ENCODE measurements at regions of chr1 and their contacts with region 1.

Region 1: DNA sequence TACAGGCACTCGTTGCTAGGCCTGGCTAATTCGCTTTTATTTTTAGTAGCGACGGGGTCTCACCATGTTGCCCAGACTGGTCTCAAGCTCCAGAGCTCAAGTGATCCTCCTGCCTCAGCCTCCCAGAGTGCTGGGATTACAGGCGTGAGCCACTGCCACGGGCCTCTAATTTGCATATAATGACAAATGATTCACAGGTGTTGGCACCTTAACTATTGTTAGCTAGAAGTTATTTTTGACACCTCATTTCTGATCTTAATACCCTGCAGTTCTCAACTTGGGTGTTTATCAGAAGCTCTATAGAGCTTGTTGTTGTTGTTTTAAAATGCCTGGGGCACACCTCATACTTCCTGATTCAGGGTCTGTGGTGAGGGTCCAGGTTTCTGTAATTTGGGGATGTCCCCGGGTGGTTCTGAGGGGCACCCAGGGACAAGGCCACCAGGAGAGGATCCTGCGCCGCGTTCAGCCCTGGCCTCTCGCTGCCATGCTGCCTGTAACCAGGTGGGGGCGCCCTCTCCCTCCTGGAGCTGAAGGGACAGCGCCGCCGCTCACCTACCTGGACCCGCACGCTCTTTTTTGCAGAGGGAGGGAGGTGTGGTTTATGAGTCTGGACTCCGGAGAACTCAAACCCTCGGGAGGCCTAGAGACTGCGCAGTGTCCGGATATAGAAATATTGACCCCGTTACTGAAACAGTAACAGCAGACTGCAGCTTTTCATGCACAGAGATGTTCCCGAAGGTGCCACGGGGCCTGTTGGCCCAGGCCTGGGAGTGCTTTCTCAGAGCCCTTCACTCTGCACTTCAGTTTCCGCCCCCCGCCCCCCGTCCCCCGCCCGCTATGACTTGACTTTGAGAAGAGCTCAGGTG is 23.0 kb upstream of the NEK2 start:
- DNase-seq: peak; percentile 93
- H3K4me3 Mint-ChIP-seq: no peak overlapping the region
- H3K27ac Mint-ChIP-seq: no peak overlapping the region
- H3K4me1 Mint-ChIP-seq: no peaks in the 10 kb centered on the region
- H3K27me3 Mint-ChIP-seq: no peaks in the 10 kb centered on the region
- CTCF ChIP-seq: peak; percentile 100

Region 2: DNA sequence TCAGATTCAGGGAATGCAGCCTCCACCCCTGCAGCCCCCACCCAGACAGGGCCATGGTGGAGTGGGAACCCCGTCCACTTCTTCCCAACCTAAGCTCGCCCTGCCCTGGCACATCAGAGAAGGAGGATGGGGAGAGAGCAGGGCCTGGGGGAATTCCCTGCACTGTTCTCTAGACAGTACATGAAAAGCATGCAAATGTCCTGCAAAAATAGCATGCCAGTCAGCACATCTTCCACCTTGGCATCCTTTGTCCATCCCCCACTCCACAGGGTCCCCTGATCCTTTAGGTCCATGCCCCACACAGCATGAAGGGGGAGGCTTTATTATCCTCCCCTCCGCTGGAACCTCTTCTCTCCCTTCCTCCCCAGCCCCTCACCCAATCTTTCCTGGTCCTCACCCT is 171.4 kb before region 1 on chr1:
- CTCF ChIA-PET with region 1: no interaction called
- POLR2A ChIA-PET with region 1: no interaction called
- intact Hi-C with region 1: no loop called
- DNase-seq: no peak
- H3K4me3 Mint-ChIP-seq: no peak overlapping the region
- H3K27ac Mint-ChIP-seq: peak overlapping the region; percentile 4
- H3K4me1 Mint-ChIP-seq: peaks cover 39% of the 10 kb centered on the region
- H3K27me3 Mint-ChIP-seq: no peaks in the 10 kb centered on the region
- CTCF ChIP-seq: no peak

Region 3: DNA sequence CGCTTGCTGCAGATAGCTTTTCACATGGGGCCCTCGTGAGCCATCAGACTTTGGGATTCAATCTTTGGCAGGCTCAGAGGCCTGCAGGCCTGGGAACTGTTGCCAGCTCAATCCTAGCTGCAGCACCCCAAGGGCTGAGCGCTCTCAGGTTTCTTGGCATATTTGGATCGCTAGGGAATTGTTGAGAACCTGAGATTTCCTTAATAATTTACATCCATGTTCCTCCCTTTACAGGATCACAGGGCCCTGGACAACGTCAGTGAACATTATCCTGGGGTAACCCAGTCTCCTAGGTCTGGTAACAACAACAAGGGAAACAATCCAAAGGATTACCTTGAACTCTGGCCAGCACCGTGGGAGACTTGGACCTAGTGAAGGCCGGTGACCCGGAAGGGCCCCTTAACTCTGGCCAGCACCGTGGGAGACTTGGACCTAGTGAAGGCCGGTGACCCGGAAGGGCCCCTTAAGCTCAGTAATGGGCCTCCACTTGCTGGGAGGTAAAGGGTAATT is 26.3 kb after region 1 on chr1:
- CTCF ChIA-PET with region 1: interaction called, 25 read pairs
- POLR2A ChIA-PET with region 1: interaction called, 3 read pairs
- intact Hi-C with region 1: no loop called
- DNase-seq: no peak
- H3K4me3 Mint-ChIP-seq: no peak overlapping the region
- H3K27ac Mint-ChIP-seq: no peak overlapping the region
- H3K4me1 Mint-ChIP-seq: no peaks in the 10 kb centered on the region
- H3K27me3 Mint-ChIP-seq: no peaks in the 10 kb centered on the region
- CTCF ChIP-seq: no peak

Region 4: DNA sequence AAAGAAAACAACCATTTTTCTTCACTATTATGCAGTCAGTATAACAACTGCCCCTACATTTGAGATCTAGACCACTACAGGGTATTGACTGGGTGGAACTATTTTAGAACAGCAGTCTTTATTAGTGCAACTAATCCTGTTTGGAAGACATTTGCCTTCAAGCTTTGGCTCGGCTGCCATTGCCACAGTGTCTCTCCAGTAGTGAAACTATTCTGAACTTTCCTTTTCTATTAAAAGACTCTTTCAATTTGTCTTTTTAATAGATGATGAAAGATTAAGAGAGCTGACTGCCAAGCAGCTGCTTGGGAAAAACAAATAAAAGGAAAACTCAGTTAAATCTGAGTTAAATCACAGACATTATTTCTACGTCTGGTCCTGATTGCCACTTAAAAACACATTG is 82.9 kb after region 1 on chr1:
- CTCF ChIA-PET with region 1: interaction called, 19 read pairs
- POLR2A ChIA-PET with region 1: interaction called, 3 read pairs
- intact Hi-C with region 1: no loop called
- DNase-seq: no peak
- H3K4me3 Mint-ChIP-seq: no peak overlapping the region
- H3K27ac Mint-ChIP-seq: no peak overlapping the region
- H3K4me1 Mint-ChIP-seq: no peaks in the 10 kb centered on the region
- H3K27me3 Mint-ChIP-seq: no peaks in the 10 kb centered on the region
- CTCF ChIP-seq: no peak

Region 5: GRCh38 chr1:211851174-211851573 is 152.8 kb after region 1 on chr1:
- CTCF ChIA-PET with region 1: interaction called, 10 read pairs
- POLR2A ChIA-PET with region 1: no interaction called
- intact Hi-C with region 1: no loop called
- DNase-seq: no peak
- H3K4me3 Mint-ChIP-seq: no peak overlapping the region
- H3K27ac Mint-ChIP-seq: no peak overlapping the region
- H3K4me1 Mint-ChIP-seq: no peaks in the 10 kb centered on the region
- H3K27me3 Mint-ChIP-seq: peaks cover 7% of the 10 kb centered on the region
- CTCF ChIP-seq: no peak

Region 6: DNA sequence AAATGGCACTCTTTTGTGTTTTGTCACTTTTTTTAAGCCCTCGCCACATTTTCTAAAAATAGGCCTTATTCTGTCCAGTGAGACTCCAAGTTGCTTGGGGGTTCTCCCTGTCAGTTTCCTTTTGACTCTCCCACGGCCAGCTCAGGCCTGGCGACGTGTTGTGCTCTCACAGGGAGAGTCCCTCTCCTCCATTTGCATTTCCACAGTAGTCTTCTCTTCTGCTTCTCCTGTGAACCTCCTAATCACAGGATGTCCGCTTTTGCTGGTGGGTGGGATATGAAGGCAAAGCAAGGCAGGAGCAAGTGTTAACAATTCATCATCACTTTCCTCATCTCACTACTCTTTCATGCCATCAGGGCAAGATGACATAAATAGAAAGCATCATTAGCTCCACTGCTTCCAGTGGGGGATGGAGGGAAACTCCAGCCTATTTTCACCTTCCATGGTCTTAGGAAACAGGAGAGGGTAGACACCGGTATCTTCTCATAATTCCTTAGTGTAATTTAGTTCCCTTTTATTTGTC is 237.1 kb after region 1 on chr1:
- CTCF ChIA-PET with region 1: interaction called, 41 read pairs
- POLR2A ChIA-PET with region 1: no interaction called
- intact Hi-C with region 1: no loop called
- DNase-seq: no peak
- H3K4me3 Mint-ChIP-seq: no peak overlapping the region
- H3K27ac Mint-ChIP-seq: peak overlapping the region; percentile 3
- H3K4me1 Mint-ChIP-seq: no peaks in the 10 kb centered on the region
- H3K27me3 Mint-ChIP-seq: no peaks in the 10 kb centered on the region
- CTCF ChIP-seq: no peak

Region 7: GRCh38 chr1:211985556-211986264 is 287.3 kb after region 1 on chr1:
- CTCF ChIA-PET with region 1: interaction called, 17 read pairs
- POLR2A ChIA-PET with region 1: no interaction called
- intact Hi-C with region 1: no loop called
- DNase-seq: no peak
- H3K4me3 Mint-ChIP-seq: no peak overlapping the region
- H3K27ac Mint-ChIP-seq: no peak overlapping the region
- H3K4me1 Mint-ChIP-seq: no peaks in the 10 kb centered on the region
- H3K27me3 Mint-ChIP-seq: no peaks in the 10 kb centered on the region
- CTCF ChIP-seq: no peak

Measured in MCF 10A (cell line).